PC-3 (cell line): ENCODE measurements at regions of chr3 and their contacts with region 1.

Region 1: DNA sequence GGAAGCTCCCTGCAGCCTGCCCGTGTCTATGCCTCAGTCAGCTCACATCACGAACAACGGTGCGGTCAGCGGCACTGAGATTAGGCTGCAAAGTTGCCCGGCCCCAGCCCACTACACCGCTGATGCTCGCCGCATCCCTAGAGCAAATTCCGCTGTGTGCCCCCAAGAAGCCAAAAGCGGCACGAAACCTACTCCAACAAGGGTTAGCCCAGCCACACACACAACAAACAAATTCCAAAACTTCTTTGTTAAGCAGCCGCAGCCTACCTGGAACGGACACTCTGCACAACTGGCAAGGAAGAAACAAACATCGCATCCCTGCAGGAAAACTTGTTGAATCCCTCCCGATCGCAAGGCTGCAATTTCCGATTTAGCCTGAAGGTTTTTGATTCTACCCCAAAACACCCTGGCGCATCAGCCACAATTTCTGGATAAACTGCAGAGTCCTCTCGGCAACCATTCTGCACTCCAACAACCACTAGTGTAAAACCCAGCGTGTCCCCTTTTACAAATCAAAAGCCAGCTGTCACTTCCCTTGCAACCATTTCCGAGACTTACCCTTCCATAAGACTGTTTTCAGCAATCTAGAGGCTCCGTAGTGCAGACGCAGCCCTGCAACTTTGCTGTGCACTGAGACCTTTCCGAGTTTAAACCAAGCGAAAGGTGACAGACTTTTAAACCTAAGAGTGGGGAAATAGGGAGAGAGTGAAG is 449 bp downstream of the ROBO1 start:
- DNase-seq: peak; percentile 27
- ATAC-seq: peak; percentile 59
- H3K4me3 ChIP-seq: peak overlapping the region; percentile 69
- H3K27ac ChIP-seq: no peak overlapping the region
- H3K4me1 ChIP-seq: no peaks in the 10 kb centered on the region; the same call in 1 of the 2 replicates
- H3K27me3 ChIP-seq: peaks cover 19% of the 10 kb centered on the region; the same call in 1 of the 2 replicates
- CTCF ChIP-seq: no peak; the same call in 1 of the 2 replicates

Region 2: DNA sequence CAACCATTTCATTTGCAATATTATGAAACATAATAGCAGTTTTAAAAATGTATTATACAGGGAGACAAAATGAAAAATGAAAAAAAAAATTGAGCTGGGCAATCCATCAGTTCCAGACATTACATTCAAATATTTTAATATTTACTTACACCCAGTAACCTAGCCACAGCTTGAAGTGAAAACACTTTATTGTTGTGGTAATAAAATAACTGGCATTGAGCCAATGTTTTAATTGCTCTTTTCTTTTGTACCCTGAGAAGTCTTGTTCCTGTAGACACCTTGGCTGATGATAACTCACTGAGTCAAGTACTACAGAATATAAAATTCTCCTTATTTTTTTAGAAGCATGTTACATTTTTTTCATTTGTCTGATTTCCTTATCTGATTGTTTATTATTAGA is 180.2 kb before region 1 on chr3:
- CTCF ChIA-PET with region 1: interaction called, 11 read pairs
- POLR2A ChIA-PET with region 1: no interaction called
- intact Hi-C with region 1: no loop called
- DNase-seq: no peak
- ATAC-seq: no peak
- H3K4me3 ChIP-seq: no peak overlapping the region
- H3K27ac ChIP-seq: no peak overlapping the region
- H3K4me1 ChIP-seq: no peaks in the 10 kb centered on the region
- H3K27me3 ChIP-seq: no peaks in the 10 kb centered on the region
- CTCF ChIP-seq: no peak

Region 3: DNA sequence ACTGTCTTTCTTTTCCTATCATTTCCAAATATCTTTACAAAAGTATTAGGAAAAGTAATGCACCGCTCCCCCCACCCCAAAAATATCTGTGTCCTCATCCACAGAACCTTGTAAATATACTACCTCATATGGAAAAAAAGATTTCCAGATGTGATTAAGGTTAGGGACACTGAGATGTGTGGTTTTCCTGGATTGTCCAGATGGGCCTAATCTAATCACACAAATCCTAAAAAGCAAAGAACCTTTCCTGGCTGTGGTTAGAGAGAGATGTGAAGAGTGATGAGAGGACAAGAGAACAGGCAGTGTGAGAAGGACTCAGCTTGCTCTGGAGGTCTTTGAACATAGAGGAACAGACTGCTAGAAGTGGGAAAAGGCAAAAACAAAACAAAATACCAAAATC is 77.3 kb before region 1 on chr3:
- CTCF ChIA-PET with region 1: no interaction called
- POLR2A ChIA-PET with region 1: no interaction called
- intact Hi-C with region 1: no loop called
- DNase-seq: no peak
- ATAC-seq: no peak
- H3K4me3 ChIP-seq: no peak overlapping the region
- H3K27ac ChIP-seq: no peak overlapping the region
- H3K4me1 ChIP-seq: no peaks in the 10 kb centered on the region
- H3K27me3 ChIP-seq: no peaks in the 10 kb centered on the region
- CTCF ChIP-seq: no peak